ENCODE measurements at regions of chr12 and their contacts with region 1.

Region 1: DNA sequence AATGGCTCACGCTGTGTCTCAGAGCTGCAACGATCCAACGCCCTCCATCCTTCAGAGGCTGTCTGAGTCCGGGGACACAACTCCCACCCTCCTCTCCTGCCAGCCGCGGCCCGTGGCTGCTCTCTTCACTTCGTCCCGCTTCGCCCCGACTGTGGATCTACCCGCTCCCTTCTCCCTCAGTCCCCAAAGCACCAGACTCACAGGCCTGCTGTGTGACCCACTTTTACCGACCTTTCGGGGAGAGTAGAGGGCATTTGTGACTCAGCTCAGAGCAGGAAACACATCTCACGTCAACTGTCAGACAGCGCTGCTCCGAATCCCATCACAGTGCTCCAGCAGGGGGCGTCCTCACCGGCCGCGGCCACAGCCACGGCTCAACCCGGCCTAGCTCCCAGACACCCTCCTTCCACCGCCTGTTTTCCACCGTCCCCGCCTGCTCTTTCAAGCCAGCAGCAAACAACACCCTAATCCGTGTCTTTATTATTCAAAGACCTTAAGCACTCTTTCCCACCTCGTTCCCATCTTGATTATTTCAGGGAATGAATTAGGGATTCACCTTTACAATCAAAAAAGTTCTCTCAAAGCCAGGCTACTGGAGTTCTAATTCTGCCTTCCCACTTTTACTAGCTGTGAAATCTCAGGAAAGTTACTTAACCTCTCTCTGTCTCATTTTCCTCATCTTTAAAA is 5.0 kb upstream of the AQP2 start:
- DNase-seq: peak; percentile 90
- ATAC-seq: peak; percentile 99
- H3K4me3 Mint-ChIP-seq: peak overlapping the region; percentile 66
- H3K27ac Mint-ChIP-seq: peak overlapping the region; percentile 87
- H3K4me1 Mint-ChIP-seq: peaks cover 25% of the 10 kb centered on the region
- H3K27me3 Mint-ChIP-seq: no peaks in the 10 kb centered on the region

Region 2: GRCh38 chr12:49707128-49707811 is 238.3 kb before region 1 on chr12 and contains the start of gene FMNL3:
- CTCF ChIA-PET with region 1: no interaction called
- DNase-seq: peak; percentile 98
- ATAC-seq: peak; percentile 97
- H3K4me3 Mint-ChIP-seq: peak within 1 kb of the TSS; percentile 89
- H3K27ac Mint-ChIP-seq: peak within 1 kb of the TSS; percentile 80
- H3K4me1 Mint-ChIP-seq: peaks cover 43% of the 10 kb centered on the region
- H3K27me3 Mint-ChIP-seq: peaks cover 27% of the 10 kb centered on the region
- total RNA-seq, gene FMNL3: 44.2 to 50.5 TPM

Region 3: DNA sequence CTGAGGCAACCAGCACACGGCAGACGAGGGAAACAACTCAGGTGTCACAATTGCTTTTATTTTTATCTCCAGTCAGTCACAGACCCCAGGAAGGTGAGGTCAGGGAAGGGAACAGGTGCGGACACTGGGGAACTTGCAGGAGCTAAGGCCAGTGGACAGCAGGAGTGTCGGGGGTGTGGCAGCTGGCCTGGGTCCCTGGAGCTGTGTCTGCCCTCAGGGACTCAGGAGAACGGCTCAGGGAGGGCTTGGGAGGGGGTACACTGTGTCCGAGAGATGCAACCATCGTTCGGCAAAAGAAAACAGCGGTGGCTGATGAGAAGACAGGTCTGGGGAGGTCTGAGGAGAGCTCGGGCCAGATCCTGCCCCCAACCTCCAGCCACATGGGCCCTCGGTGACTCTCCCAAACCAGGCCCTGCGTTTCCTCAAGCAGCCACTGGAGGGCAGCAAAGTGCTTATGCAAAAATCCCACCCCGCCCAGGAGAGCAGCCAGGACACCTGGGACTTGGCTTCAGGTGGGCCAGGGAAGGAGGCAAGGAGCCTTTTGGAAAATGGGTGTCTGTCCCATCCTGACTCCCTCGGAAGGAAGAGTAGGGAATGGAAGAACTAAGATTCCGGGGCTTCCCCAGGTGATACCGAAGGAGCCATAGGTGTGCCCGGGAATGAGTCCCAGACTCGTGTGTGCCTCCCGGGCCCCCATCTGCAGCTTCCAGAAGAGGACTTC is 78.5 kb before region 1 on chr12:
- CTCF ChIA-PET with region 1: interaction called, 13 read pairs
- DNase-seq: peak; percentile 81
- ATAC-seq: peak; percentile 85
- H3K4me3 Mint-ChIP-seq: no peak overlapping the region
- H3K27ac Mint-ChIP-seq: no peak overlapping the region
- H3K4me1 Mint-ChIP-seq: no peaks in the 10 kb centered on the region
- H3K27me3 Mint-ChIP-seq: peaks cover 9% of the 10 kb centered on the region

Region 4: GRCh38 chr12:49907352-49907751 is 38.2 kb before region 1 on chr12:
- CTCF ChIA-PET with region 1: interaction called, 11 read pairs
- DNase-seq: no peak
- ATAC-seq: no peak
- H3K4me3 Mint-ChIP-seq: no peak overlapping the region
- H3K27ac Mint-ChIP-seq: no peak overlapping the region
- H3K4me1 Mint-ChIP-seq: peaks cover 10% of the 10 kb centered on the region
- H3K27me3 Mint-ChIP-seq: peaks cover 30% of the 10 kb centered on the region

Region 5: DNA sequence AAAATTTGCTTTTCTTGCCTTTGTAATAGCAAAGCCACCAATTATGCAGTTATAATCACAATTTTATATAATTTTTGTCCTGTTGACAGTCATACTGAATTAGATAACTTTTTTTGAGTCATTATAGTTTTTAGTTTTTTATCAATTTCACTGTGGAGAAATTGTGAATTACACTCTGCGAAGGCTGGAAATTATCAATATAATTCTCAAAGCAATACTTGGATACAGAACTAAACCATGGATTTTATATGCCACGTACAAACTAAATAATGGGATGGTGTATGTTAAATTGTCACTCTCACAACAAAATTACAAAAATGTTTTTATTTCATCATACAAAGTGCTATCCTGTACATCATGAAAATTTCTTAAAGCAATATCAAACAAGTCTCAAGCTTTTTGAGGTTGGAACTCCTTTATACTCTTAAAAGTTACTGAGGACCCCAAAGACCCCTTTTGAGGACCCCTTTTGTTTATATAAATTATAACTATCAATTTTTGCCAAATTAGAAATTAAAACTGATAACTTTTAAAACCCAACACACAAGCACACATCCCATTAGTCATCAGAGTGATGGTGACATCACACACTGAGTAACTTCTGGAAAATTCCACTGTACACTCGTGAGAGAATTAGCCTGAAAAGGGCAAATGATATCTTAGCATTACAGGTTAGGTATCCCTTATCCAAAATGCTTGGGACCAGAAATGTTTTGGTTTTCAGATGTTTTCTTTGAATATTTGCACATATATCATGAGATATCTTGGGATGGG is 14.8 kb before region 1 on chr12:
- CTCF ChIA-PET with region 1: interaction called, 31 read pairs
- DNase-seq: no peak
- ATAC-seq: no peak
- H3K4me3 Mint-ChIP-seq: no peak overlapping the region
- H3K27ac Mint-ChIP-seq: no peak overlapping the region
- H3K4me1 Mint-ChIP-seq: no peaks in the 10 kb centered on the region
- H3K27me3 Mint-ChIP-seq: peaks cover 20% of the 10 kb centered on the region

Region 6: GRCh38 chr12:49959570-49960465 is 14.3 kb after region 1 on chr12:
- CTCF ChIA-PET with region 1: interaction called, 92 read pairs
- DNase-seq: no peak
- ATAC-seq: no peak
- H3K4me3 Mint-ChIP-seq: peak overlapping the region; percentile 3
- H3K27ac Mint-ChIP-seq: no peak overlapping the region
- H3K4me1 Mint-ChIP-seq: peaks cover 5% of the 10 kb centered on the region
- H3K27me3 Mint-ChIP-seq: peaks cover 81% of the 10 kb centered on the region

Region 7: GRCh38 chr12:49974231-49974675 is 28.7 kb after region 1 on chr12:
- CTCF ChIA-PET with region 1: interaction called, 92 read pairs
- DNase-seq: no peak
- ATAC-seq: no peak
- H3K4me3 Mint-ChIP-seq: no peak overlapping the region
- H3K27ac Mint-ChIP-seq: no peak overlapping the region
- H3K4me1 Mint-ChIP-seq: no peaks in the 10 kb centered on the region
- H3K27me3 Mint-ChIP-seq: no peaks in the 10 kb centered on the region